ENCODE measurements at regions of chr19 and their contacts with region 1.

Region 1: GRCh38 chr19:55418185-55418584 is 10.6 kb upstream of the UBE2S start:
- DNase-seq: peak; percentile 60
- ATAC-seq: peak; percentile 95
- H3K4me3 ChIP-seq: no peak overlapping the region
- H3K27ac ChIP-seq: no peak overlapping the region
- H3K4me1 ChIP-seq: no peaks in the 10 kb centered on the region
- H3K27me3 ChIP-seq: no peaks in the 10 kb centered on the region
- CTCF ChIP-seq: peak; percentile 95

Region 2: DNA sequence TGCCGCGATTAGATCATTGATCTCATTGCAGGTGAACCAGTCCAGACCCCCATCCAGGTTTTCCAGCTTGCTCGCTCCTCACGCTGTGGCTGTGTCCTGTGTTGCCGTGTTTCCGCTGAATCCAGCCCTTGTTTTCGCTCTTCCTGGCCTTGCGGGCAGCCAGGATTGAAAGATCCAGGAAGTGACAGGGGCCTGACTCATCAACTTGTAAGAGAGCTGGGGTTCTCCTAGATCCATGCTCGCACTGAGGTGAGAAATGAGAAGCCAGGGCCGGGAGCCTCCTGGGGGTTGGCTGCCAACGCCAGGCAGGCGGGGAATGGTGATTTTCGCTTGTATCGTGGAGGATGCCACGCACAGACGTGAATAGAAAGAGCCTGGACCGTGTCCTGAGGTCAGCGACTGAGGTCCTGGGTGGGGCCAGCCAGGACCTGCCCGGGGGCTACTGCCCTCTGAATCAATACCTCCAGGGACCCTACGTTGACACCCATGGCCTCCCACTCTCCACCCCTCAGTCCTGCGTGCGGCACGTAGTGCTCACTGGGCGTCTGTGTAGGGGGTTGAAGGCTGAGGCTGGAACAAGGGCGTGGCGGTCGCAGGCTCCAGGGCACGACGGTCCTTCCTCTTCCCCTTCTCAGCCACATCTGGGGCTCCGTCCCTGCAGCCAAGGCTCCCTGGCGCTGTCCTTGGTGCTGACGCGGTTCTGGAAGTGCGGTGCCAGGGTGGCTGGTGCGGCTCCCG is 201.6 kb before region 1 on chr19:
- CTCF ChIA-PET with region 1: interaction called, 12 read pairs
- POLR2A ChIA-PET with region 1: no interaction called
- in situ Hi-C with region 1: no loop called
- intact Hi-C with region 1: no loop called
- DNase-seq: peak; percentile 99
- ATAC-seq: peak; percentile 94
- H3K4me3 ChIP-seq: peak overlapping the region; percentile 65 to 74
- H3K27ac ChIP-seq: peak overlapping the region; percentile 95
- H3K4me1 ChIP-seq: peaks cover 14% of the 10 kb centered on the region
- H3K27me3 ChIP-seq: no peaks in the 10 kb centered on the region
- CTCF ChIP-seq: no peak

Region 3: DNA sequence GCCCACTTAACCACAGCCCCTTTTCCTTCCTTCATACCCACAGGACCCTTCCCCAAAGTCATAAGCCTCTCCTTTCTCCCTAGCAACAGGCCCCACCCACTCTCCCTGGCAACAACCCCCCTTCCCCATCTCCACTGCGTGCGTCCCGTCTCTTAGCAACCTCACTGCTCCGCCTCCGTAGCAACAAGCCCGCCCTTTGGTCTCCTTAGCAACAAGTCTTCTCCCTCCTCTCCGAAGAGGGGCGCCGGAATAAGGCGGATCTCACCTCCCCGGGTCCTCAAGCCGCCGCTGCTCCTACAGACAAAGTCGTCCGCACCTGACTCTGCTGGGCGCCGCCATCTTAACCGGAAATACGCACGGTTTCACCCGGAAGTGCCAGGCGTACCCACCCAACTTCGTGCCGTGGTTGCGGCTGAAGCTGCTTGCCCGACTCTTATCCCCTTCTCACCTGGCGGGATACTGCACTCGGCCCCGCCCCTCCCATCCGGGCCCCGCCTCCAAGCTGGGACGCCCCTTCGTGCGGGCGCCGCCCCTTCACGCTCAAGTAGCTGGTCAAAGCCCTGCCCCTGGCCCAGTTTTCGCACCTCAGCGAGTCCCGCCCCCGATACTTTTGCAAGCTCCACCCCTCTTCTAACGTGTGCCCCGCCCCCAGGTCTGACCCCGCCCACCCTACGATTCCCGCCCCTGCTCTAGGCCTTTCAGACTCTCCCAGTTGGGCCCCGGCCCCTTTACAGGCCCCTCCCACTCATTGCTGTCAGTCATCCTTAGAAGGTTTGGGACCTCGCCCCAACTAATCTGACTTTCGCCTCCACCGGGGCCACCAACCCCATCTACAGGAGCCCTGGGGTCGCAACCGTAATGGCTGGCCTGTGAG is 138.2 kb before region 1 on chr19 and contains the start of gene HSPBP1:
- CTCF ChIA-PET with region 1: no interaction called
- POLR2A ChIA-PET with region 1: no interaction called
- in situ Hi-C with region 1: no loop called
- intact Hi-C with region 1: no loop called
- DNase-seq: peak; percentile 90
- ATAC-seq: peak; percentile 97
- H3K4me3 ChIP-seq: peak within 1 kb of the TSS; percentile 66 to 68
- H3K27ac ChIP-seq: peak within 1 kb of the TSS; percentile 76
- H3K4me1 ChIP-seq: peaks cover 15% of the 10 kb centered on the region
- H3K27me3 ChIP-seq: no peaks in the 10 kb centered on the region
- CTCF ChIP-seq: no peak
- total RNA-seq, gene HSPBP1: 84.2 TPM

Region 4: DNA sequence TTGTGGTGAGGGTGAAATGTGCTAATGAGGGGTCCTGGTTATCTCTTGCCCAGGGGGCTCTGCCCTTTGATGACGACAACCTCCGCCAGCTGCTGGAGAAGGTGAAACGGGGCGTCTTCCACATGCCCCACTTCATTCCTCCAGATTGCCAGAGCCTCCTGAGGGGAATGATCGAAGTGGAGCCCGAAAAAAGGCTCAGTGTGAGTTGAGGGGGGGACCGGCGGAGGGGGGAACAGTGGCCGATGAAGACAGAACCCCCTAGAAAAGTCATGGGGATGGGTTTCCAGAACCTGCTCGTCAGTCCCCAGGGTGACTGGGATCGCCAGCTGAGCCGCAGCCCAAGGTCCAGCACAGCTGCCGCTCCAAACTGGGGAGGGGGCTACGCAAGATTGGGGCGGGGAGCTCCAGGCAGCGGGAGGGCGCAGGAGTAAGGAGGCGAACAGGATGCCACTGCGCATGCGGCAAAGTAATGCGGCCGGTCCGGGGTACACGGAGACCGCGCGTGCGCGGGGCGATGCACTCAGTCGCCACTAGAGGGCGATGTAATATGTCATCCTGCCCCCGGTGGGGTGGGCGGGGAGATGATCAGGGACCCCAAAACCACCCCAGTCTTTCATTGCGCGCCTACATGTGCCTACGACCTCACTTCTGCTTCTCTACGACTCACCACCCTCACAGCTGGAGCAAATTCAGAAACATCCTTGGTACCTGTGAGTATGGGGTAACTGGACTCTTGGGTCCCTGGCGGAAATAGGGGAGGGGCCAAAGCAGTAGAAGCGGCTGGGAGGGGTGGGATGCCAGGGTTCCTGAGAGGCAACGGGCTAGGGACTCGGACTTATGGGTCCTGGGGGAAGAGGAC is 116.5 kb before region 1 on chr19:
- CTCF ChIA-PET with region 1: no interaction called
- POLR2A ChIA-PET with region 1: no interaction called
- in situ Hi-C with region 1: no loop called
- intact Hi-C with region 1: no loop called
- DNase-seq: peak; percentile 55
- ATAC-seq: peak; percentile 87
- H3K4me3 ChIP-seq: peak overlapping the region; percentile 47 to 80
- H3K27ac ChIP-seq: peak overlapping the region; percentile 75
- H3K4me1 ChIP-seq: peaks cover 8% of the 10 kb centered on the region
- H3K27me3 ChIP-seq: no peaks in the 10 kb centered on the region
- CTCF ChIP-seq: peak; percentile 99

Region 5: DNA sequence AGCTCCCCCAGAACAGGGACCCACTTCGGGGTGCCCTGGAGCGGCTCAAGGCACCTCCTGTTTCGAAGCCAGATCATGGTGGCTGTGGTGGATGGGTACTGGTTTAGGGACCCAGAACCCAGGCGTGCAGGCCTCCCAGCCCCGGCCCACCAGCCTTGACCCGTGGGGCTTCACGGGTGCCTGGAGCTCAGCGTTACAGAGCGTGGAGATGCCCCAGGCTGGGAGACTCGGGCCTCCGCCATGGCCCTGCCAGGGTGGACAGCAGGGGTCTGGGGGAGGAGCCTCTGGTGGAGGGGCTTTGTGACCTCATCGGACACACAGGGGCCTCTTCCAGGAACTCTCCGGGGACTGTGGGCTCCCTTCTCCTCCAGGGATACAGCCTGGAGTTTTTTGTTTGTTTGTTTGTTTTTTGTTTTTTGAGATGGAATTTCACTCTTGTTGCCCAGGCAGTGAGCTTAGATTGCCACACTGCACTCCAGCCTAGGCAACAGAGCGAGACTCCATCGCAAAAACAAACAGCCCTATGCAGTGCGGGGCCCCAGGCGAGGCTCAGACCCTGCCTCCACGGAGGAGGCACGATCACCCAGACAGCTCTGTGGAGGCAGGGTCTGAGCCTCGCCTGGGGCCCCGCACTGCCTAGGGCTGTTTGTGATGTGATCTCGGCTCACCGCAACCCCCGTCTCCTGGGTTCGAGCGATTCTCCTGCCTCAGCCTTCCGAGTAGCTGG is 55.0 kb before region 1 on chr19 and contains the start of gene GARIN5B:
- CTCF ChIA-PET with region 1: no interaction called
- POLR2A ChIA-PET with region 1: no interaction called
- in situ Hi-C with region 1: no loop called
- intact Hi-C with region 1: no loop called
- DNase-seq: no peak
- ATAC-seq: peak; percentile 35; the same call in 1 of the 2 replicates
- H3K4me3 ChIP-seq: no peak within 1 kb of the TSS
- H3K27ac ChIP-seq: no peak within 1 kb of the TSS; the same call in 1 of the 2 replicates
- H3K4me1 ChIP-seq: peaks cover 5% of the 10 kb centered on the region; the same call in 1 of the 2 replicates
- H3K27me3 ChIP-seq: no peaks in the 10 kb centered on the region
- CTCF ChIP-seq: no peak
- total RNA-seq, gene GARIN5B: not detected

Region 6: DNA sequence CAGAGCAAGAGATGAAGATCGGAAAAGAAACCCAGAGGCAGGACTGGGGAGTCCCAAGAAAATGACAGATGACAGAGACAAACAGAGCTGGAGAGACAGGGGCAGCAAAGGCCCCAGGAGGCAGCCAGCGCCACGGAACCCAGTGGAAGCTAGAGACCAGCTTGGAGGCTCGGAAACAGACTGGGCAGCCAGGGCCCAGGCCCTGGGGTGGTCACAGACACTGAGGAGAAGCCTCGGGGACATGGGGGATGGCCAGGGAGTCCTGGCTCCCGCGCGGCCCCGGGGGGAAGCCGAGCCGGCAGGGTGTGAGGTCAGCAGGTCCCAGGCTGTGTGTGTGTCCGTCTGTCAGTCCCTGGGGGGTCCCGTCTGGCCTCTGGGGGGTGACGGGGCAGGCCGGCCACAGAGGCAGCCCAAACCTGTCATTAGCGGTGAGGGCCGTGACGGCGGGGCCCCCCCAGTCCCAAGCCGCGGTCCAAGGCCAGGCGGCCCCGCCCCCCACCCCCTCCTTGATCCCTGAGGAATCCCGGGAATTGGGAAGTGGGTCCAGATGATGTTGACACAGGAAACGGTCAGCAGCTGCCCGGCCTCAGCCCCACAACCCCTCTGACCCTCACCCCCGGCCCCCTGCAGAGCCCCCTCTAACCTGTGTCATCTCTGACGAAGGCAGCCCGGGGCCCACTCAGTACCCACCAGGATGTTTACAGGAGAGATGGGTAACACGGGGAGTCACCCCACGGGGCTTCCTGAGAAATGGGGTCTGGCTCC is 44.0 kb before region 1 on chr19:
- CTCF ChIA-PET with region 1: no interaction called
- POLR2A ChIA-PET with region 1: no interaction called
- in situ Hi-C with region 1: no loop called
- intact Hi-C with region 1: no loop called
- DNase-seq: no peak
- ATAC-seq: peak; percentile 18
- H3K4me3 ChIP-seq: peak overlapping the region in 1 of 2 experiments; percentile 38; a peak in 2 of 4 replicates
- H3K27ac ChIP-seq: peak overlapping the region; percentile 55; the same call in 1 of the 2 replicates
- H3K4me1 ChIP-seq: peaks cover 54% of the 10 kb centered on the region
- H3K27me3 ChIP-seq: no peaks in the 10 kb centered on the region
- CTCF ChIP-seq: no peak

Region 7: DNA sequence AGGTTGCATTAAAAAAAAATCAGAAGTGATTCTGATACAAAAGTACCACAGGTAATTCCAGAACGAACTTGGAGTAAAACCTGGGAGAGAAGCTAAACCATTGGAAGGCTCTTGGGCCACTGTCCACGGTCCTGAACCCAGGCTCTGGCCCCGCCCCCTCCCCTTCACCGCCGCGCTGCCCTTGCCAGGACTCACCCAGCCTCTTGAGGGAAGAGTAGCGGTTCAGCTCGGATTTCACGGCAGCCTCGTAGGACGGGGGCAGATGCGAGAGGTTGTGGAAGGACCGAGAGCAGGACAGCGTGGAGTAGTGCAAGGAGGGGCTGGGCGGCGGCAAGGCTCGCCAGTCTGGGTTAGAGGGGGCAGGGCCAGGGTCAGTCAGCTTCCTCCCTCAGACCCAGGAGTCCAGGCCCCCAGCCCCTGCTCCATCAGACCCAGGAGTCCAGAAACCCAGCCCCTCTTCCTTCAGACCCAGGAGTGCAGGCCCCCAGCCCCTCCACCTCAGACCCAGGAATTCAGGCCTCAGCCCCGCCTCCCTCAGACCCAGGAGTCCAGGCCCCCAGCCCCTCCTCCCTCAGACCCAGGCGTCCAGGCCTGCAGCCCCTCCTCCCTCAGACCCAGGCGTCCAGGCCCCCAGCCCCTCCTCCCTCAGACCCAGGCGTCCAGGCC is 19.4 kb after region 1 on chr19:
- CTCF ChIA-PET with region 1: no interaction called
- POLR2A ChIA-PET with region 1: interaction called, 27 read pairs
- in situ Hi-C with region 1: no loop called
- intact Hi-C with region 1: no loop called
- DNase-seq: no peak
- ATAC-seq: peak; percentile 81
- H3K4me3 ChIP-seq: no peak overlapping the region
- H3K27ac ChIP-seq: no peak overlapping the region
- H3K4me1 ChIP-seq: peaks cover 5% of the 10 kb centered on the region; the same call in 1 of the 2 replicates
- H3K27me3 ChIP-seq: peaks cover 9% of the 10 kb centered on the region
- CTCF ChIP-seq: no peak

Measured in Panc1 (cell line).